CD4-positive, alpha-beta T cell (primary cell): ENCODE measurements at regions of chr2 and their contacts with region 1.

Region 1: DNA sequence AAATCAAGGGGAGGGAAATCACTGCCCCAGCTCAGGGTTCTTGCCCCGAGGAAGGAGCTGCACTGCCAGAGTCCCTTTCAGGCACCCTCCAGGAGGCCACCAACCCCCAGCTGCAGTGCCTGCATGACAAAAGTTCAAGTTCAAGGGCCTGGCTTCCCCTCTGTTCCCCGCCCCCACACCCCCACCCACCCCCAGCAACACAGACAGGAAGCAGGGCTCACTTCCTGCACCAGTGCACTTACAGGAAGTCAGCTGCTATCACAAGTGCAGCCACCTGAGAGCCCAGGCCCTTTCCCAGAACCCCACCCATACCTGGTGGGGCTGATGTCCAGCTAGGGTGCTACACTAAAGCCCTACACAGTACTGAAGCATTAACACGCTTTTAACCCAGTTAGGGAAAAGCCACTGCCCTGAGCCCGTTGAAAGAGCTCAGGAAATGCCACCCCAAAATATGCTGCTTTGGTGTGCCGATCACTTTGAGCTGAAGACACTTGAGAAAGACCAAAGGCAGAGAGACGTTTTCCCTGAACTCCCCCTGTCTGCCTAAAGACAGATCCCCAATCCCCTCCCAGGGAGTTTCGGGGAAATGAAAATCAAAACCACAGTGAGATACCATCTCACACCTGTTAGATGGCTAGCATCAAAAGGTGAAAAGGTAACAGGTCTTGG is 109.9 kb upstream of the CAB39 start:
- DNase-seq: peak; percentile 27 to 81 (median 64)
- ATAC-seq: peak; percentile 89
- H3K4me3 ChIP-seq: peak overlapping the region; percentile 17
- H3K4me3 Mint-ChIP-seq: peak overlapping the region; percentile 78
- H3K27ac ChIP-seq: peak overlapping the region; percentile 65 to 82
- H3K27ac Mint-ChIP-seq: peak overlapping the region; percentile 98
- H3K4me1 ChIP-seq: peaks cover 43% of the 10 kb centered on the region
- H3K4me1 Mint-ChIP-seq: peaks cover 91% of the 10 kb centered on the region
- H3K27me3 ChIP-seq: no peaks in the 10 kb centered on the region
- H3K27me3 Mint-ChIP-seq: no peaks in the 10 kb centered on the region
- CTCF ChIP-seq: no peak

Region 2: GRCh38 chr2:230205034-230205433 is 397.7 kb before region 1 on chr2:
- CTCF ChIA-PET with region 1: no interaction called
- POLR2A ChIA-PET with region 1: interaction called, 4 read pairs
- intact Hi-C with region 1: loop called in 1 of 2 experiments (anchors 5 kb)
- DNase-seq: no peak
- ATAC-seq: no peak
- H3K4me3 ChIP-seq: no peak overlapping the region
- H3K4me3 Mint-ChIP-seq: no peak overlapping the region
- H3K27ac ChIP-seq: no peak overlapping the region
- H3K27ac Mint-ChIP-seq: peak overlapping the region; percentile 34
- H3K4me1 ChIP-seq: peaks cover 4% of the 10 kb centered on the region
- H3K4me1 Mint-ChIP-seq: peaks cover 18% of the 10 kb centered on the region
- H3K27me3 ChIP-seq: no peaks in the 10 kb centered on the region
- H3K27me3 Mint-ChIP-seq: no peaks in the 10 kb centered on the region
- CTCF ChIP-seq: no peak

Region 3: DNA sequence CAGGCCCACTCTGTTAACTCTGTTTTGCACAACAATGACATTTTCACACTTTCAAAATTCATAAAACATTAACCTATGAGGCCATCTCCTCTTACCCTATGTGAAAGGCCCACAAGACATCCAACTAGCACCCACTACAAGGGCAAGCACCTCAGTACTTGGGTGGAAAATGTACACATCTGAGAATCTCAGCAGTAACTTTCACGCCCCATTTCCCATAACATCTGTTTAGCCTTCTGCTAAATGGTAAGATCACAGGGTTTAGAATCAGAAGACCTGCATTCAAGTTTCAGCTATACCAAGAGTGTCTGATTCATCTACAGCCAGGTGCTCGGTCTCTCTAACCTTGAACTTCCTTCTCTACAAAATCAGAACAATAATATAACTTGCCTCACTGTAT is 97.5 kb before region 1 on chr2:
- CTCF ChIA-PET with region 1: no interaction called
- POLR2A ChIA-PET with region 1: interaction called, 10 read pairs
- intact Hi-C with region 1: no loop called
- DNase-seq: no peak
- ATAC-seq: no peak
- H3K4me3 ChIP-seq: no peak overlapping the region
- H3K4me3 Mint-ChIP-seq: no peak overlapping the region
- H3K27ac ChIP-seq: no peak overlapping the region
- H3K27ac Mint-ChIP-seq: no peak overlapping the region
- H3K4me1 ChIP-seq: no peaks in the 10 kb centered on the region
- H3K4me1 Mint-ChIP-seq: no peaks in the 10 kb centered on the region
- H3K27me3 ChIP-seq: no peaks in the 10 kb centered on the region
- H3K27me3 Mint-ChIP-seq: no peaks in the 10 kb centered on the region
- CTCF ChIP-seq: no peak

Region 4: DNA sequence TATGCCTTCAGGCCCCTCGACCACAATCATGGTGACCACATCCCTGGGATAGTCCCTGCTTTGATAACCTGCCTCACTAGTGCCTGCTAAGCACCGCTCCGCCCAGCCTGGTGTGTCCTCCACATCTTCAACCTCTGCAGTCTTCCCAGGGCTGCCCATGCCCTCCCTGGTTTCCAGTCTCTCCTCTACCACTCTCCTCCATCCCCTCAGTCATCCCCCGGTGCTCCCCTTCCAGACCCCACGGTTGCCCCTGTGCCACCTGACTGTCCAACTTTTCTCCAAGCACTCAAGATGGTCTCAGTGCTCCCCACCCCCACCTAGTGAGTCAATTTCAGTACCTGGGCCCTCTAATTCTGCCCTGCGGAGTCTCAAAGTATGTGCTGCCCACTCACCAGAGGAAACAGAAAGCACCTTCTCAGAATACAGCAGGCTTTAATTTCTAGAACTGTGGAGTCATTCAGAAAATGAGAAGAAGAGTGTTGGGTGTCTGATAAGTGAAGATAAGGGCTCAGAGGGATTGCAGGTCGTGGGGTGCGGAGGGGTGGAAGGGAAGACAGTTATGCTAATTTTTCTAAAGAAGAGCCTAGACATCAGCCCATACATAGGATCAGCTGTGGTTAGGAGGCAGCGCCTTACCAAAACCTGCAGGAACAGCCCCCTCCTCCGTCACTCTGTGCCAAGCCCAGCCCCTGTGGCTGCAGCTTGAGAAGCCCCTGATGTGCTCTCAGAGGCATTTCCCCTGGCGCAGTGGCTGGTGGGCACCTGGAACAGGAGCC is 56.4 kb after region 1 on chr2:
- CTCF ChIA-PET with region 1: no interaction called
- POLR2A ChIA-PET with region 1: interaction called, 3 read pairs
- intact Hi-C with region 1: loop called in 1 of 2 experiments (anchors 5 kb)
- DNase-seq: peak in 6 of 14 experiments; percentile 16 to 66 (median 37)
- ATAC-seq: peak; percentile 40
- H3K4me3 ChIP-seq: peak overlapping the region; percentile 1
- H3K4me3 Mint-ChIP-seq: peak overlapping the region; percentile 65
- H3K27ac ChIP-seq: peak overlapping the region in 1 of 2 donors; percentile 18
- H3K27ac Mint-ChIP-seq: peak overlapping the region; percentile 90
- H3K4me1 ChIP-seq: peaks cover 87% of the 10 kb centered on the region
- H3K4me1 Mint-ChIP-seq: peaks cover 92% of the 10 kb centered on the region
- H3K27me3 ChIP-seq: no peaks in the 10 kb centered on the region
- H3K27me3 Mint-ChIP-seq: no peaks in the 10 kb centered on the region
- CTCF ChIP-seq: no peak

Region 5: GRCh38 chr2:230751062-230751461 is 148.4 kb after region 1 on chr2:
- CTCF ChIA-PET with region 1: no interaction called
- POLR2A ChIA-PET with region 1: no interaction called
- intact Hi-C with region 1: no loop called
- DNase-seq: peak in 1 of 14 experiments; percentile 21
- ATAC-seq: peak; percentile 39
- H3K4me3 ChIP-seq: no peak overlapping the region
- H3K4me3 Mint-ChIP-seq: no peak overlapping the region
- H3K27ac ChIP-seq: no peak overlapping the region
- H3K27ac Mint-ChIP-seq: peak overlapping the region; percentile 68
- H3K4me1 ChIP-seq: peaks cover 12% of the 10 kb centered on the region
- H3K4me1 Mint-ChIP-seq: peaks cover 89% of the 10 kb centered on the region
- H3K27me3 ChIP-seq: no peaks in the 10 kb centered on the region
- H3K27me3 Mint-ChIP-seq: no peaks in the 10 kb centered on the region
- CTCF ChIP-seq: no peak

Region 6: DNA sequence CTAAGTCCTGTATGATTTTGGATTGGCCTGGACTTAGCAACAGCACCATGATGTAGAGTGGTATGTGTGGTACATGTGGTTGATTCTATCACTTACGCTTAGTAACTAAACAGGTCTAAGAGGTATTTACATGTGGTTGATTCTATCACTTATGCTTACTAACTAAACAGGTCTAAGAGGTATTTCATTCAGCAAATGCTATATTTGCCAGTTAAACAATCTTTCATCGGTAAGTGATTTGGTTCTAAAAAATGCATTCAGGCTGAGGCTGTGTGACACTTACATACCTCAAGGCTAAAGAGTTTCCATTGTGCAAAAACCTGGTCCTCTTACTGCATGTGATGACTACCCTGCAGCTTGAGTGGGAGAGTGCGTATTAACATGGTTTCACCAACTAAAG is 1960.9 kb after region 1 on chr2:
- CTCF ChIA-PET with region 1: no interaction called
- POLR2A ChIA-PET with region 1: no interaction called
- intact Hi-C with region 1: no loop called
- DNase-seq: no peak
- ATAC-seq: no peak
- H3K4me3 ChIP-seq: no peak overlapping the region
- H3K4me3 Mint-ChIP-seq: no peak overlapping the region
- H3K27ac ChIP-seq: no peak overlapping the region
- H3K27ac Mint-ChIP-seq: no peak overlapping the region
- H3K4me1 ChIP-seq: no peaks in the 10 kb centered on the region
- H3K4me1 Mint-ChIP-seq: no peaks in the 10 kb centered on the region
- H3K27me3 ChIP-seq: no peaks in the 10 kb centered on the region
- H3K27me3 Mint-ChIP-seq: no peaks in the 10 kb centered on the region
- CTCF ChIP-seq: no peak